Pancreas (tissue), 10 donors: ENCODE measurements at regions of chr16 and their contacts with region 1.

Region 1: GRCh38 chr16:83967806-83968305 is at the start of gene NECAB2:
- DNase-seq: peak in 4 of 6 donors; percentile 40 to 83 (median 64)
- ATAC-seq: peak; percentile 55 to 89 (median 79)
- H3K4me3 ChIP-seq: peak within 1 kb of the TSS in 2 of 4 donors; percentile 22 to 40
- H3K27ac ChIP-seq: no peak within 1 kb of the TSS
- H3K4me1 ChIP-seq: no peaks in the 10 kb centered on the region
- H3K27me3 ChIP-seq: no peaks in the 10 kb centered on the region
- CTCF ChIP-seq: peak; percentile 19 to 65 (median 54)
- total RNA-seq, gene NECAB2: 0.37 to 1.7 (median 0.81) TPM

Region 2: DNA sequence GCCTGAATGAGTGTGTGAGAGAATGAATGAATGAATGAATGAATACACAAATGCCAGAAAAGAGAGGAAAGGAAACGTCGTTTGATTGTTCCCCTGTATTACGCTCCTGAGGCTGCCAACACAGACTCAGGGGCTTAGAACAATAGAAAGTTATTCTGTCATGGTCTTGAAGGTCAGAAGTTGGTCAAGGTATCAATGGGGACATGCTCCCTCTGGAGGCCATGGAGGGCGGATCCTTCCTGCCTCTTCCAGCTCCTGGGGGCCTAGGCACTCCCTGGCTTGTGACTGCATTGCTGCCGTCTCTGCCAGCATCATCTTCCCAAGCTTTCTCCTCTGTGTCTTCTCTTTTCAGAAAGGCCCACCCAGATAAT is 76.2 kb after region 1 on chr16:
- intact Hi-C with region 1: loop called in 1 of 3 experiments (anchors 10 kb)
- DNase-seq: peak in 2 of 6 donors; percentile 37 to 47
- ATAC-seq: no peak
- H3K4me3 ChIP-seq: no peak overlapping the region
- H3K27ac ChIP-seq: no peak overlapping the region
- H3K4me1 ChIP-seq: peaks cover 7 to 10% (median 9%) of the 10 kb centered on the region in 3 donors
- H3K27me3 ChIP-seq: no peaks in the 10 kb centered on the region
- CTCF ChIP-seq: no peak

Region 3: GRCh38 chr16:84062734-84063640 is 95.1 kb after region 1 on chr16:
- intact Hi-C with region 1: loop called in 1 of 3 experiments (anchors 5 kb)
- DNase-seq: peak; percentile 57 to 93 (median 79)
- ATAC-seq: peak; percentile 89 to 96 (median 94)
- H3K4me3 ChIP-seq: no peak overlapping the region
- H3K27ac ChIP-seq: no peak overlapping the region
- H3K4me1 ChIP-seq: no peaks in the 10 kb centered on the region
- H3K27me3 ChIP-seq: no peaks in the 10 kb centered on the region
- CTCF ChIP-seq: peak; percentile 86 to 91 (median 88)

Region 4: GRCh38 chr16:84175350-84176081 is 207.7 kb after region 1 on chr16:
- intact Hi-C with region 1: loop called in 1 of 3 experiments (anchors 10 kb)
- DNase-seq: peak in 3 of 6 donors; percentile 46 to 75 (median 59)
- ATAC-seq: peak; percentile 82 to 90 (median 86)
- H3K4me3 ChIP-seq: no peak overlapping the region
- H3K27ac ChIP-seq: no peak overlapping the region
- H3K4me1 ChIP-seq: peaks cover 0 to 6% (median 0%) of the 10 kb centered on the region in 3 donors
- H3K27me3 ChIP-seq: no peaks in the 10 kb centered on the region
- CTCF ChIP-seq: peak; percentile 40 to 79 (median 58)